Activated T-helper 1 cell treated with anti-CD3 and anti-CD28 coated beads, Interleukin-12 subunit alpha, Interleukin-12 subunit beta, Interleukin-2, Interleukin-4 antibody, amounts not matched to agents 30 ng/mL and 10 ng/mL and 1 ng/mL, durations not matched to agents 14 hours and 24 hours and 36 hours (primary cell): ENCODE measurements at regions of chr3 and their contacts with region 1.

Region 1: DNA sequence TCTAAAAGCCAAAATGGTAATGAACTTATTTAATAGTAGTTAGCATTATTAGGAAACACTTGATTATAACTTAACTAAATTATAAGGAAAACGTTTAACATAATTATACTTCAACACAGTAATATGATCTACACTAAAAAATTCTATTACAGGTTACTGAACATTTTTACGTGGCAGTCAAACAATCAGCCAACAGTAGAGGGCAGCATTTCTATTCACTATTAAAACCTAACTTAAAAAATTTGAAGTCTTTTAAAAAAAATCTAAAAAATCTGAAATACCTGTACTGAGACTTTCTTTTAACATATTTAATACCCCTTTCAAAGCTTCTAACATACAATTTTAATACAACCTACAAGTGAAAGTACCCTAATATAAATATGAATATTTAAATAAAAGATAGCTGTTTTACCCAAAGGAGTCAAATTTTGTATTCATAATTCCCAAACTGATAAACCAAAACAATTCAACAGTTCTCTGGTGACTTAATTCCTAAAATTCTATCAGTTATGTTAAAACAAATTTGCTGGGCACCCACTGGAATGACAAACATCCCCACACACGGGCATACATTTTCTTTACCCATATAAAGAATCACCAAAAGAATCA is 41.5 kb downstream of the DLG1 start:
- DNase-seq: peak; percentile 2
- H3K4me3 Mint-ChIP-seq: no peak overlapping the region
- H3K27ac Mint-ChIP-seq: no peak overlapping the region
- H3K4me1 Mint-ChIP-seq: peaks cover 41% of the 10 kb centered on the region
- H3K27me3 Mint-ChIP-seq: no peaks in the 10 kb centered on the region

Region 2: GRCh38 chr3:197224034-197224444 is 32.9 kb before region 1 on chr3:
- intact Hi-C with region 1: loop called (anchors 2 kb)
- DNase-seq: no peak
- H3K4me3 Mint-ChIP-seq: no peak overlapping the region
- H3K27ac Mint-ChIP-seq: no peak overlapping the region
- H3K4me1 Mint-ChIP-seq: peaks cover 28% of the 10 kb centered on the region
- H3K27me3 Mint-ChIP-seq: no peaks in the 10 kb centered on the region

Region 3: DNA sequence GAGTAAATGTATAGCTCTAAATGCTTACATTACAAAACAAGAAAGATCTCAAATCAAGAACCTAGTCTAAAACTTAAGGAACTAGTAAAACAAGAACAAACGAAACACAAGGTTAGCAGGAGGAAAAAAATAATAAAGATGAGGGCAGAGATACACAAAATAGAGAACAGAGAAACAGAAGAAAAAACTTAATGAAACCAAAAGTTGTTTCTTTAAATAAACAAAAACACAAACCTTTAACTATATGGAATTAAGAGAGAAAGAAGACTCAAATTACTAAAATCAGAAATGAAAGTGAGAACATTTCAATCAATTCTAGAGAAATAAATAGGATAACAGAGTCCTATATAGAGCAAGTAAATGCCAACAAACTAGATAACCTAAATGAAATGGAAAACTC is 18.1 kb before region 1 on chr3:
- intact Hi-C with region 1: loop called (anchors 2 kb)
- DNase-seq: no peak
- H3K4me3 Mint-ChIP-seq: peak overlapping the region; percentile 21
- H3K27ac Mint-ChIP-seq: peak overlapping the region; percentile 65
- H3K4me1 Mint-ChIP-seq: peaks cover 49% of the 10 kb centered on the region
- H3K27me3 Mint-ChIP-seq: no peaks in the 10 kb centered on the region

Region 4: DNA sequence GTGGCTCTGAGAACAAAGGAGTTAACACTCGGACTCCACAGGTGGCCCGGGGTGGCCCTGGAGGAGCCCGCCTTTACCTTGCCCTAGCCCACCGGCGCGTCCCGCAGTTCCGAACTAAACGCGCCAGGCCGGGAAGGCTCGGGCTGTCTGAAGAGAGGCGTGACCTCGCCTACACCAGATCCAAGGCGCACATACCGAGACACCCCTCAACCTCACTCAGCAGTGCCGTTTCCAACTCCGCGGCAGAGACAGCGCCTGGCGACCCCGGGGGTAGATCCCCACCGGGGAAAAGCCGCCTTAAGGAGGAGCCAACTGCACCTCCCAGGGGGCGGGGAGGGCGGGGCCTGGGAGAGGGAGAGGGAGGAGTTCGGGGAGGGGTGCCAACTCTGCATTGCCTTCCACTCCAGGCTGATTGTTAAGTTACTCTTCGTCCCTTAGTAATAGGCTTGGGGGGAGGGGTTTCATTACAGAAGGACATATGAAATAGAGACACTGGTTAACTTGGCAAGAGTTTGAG is 41.5 kb after region 1 on chr3 and contains the start of gene DLG1:
- intact Hi-C with region 1: loop called (anchors 2 kb)
- DNase-seq: peak; percentile 64
- H3K4me3 Mint-ChIP-seq: peak within 1 kb of the TSS; percentile 95
- H3K27ac Mint-ChIP-seq: peak within 1 kb of the TSS; percentile 96
- H3K4me1 Mint-ChIP-seq: peaks cover 39% of the 10 kb centered on the region
- H3K27me3 Mint-ChIP-seq: peaks cover 28% of the 10 kb centered on the region
- total RNA-seq, gene DLG1: 85.0 and 87.1 TPM in 2 replicates

Region 5: DNA sequence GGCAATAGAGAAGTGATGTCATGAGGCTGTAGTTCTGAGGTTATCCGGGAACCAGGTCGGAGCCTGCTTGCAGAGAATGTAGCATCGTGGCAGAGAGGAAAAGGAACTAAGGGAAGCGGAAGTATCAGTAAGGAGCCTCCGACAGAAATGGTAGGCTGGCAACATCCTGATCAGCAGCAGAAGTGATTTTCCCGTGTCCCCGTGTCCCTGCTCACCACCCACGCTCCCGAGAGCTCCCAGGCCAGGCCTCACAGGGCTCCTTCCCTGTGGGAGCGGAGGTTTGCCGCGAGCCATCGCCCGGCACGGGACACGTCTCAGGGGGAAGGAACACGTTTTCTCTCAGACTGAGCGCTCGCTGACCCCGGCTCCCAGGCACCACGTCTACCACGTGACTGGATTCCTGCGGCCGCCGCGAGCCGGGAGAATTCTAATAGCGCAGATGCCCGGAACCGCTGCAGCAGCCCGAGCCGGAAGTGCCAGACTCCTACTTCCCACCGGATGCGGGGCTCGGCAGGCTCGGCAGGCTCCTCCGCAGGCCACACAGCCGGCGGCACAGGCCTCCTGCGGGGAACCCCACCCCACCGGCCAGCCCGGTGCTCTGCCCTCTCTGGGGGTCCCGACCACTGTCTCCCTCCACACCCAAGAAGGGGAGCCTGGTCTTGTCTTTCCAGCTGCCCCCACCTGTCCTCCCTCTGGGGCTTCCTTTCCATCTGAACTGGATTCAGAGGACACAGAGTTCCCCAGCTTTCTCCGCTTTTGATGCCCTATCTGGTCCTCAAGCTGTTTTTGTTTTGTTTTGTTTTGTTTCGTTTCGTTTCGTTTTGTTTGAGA is 199.5 kb after region 1 on chr3:
- intact Hi-C with region 1: loop called (anchors 2 kb)
- DNase-seq: peak; percentile 36
- H3K4me3 Mint-ChIP-seq: peak overlapping the region; percentile 87
- H3K27ac Mint-ChIP-seq: peak overlapping the region; percentile 88
- H3K4me1 Mint-ChIP-seq: peaks cover 22% of the 10 kb centered on the region
- H3K27me3 Mint-ChIP-seq: peaks cover 22% of the 10 kb centered on the region

Region 6: DNA sequence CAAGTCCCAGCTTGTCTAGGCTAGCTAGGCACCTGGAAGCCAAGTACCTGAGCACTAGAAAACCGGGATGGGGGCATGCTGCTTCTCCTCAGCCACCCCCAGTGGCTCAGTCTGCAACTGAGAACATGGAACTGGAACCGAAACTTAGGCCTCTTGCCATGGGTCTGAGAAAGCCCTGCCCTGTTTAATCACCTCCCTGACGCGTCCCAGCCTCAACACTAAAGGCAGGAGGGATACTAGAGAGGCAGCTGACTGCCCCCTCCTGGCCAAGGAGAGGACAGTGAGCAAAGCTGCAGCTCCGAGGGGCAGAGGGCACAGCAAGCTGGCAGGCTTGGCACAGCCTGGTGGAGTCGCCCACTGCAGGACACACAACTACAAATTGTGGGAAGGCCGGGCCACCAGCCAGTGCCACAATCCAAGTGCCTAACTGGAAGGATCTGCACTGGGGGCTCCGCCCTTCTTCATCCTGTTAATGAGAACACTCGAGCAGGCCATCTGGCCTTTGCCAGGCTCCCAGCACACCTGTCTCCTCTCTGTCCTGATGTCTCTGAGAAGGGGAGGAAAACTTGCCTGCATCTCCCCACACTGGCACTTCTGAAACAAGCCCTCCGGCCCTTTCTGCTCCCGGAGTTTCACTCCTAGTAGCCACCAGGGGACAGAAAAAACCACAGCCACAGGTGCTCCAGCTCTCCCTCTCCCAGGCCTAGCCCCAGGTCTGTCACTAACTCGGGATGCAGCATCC is 245.1 kb after region 1 on chr3:
- intact Hi-C with region 1: loop called (anchors 1 kb)
- DNase-seq: peak; percentile 20
- H3K4me3 Mint-ChIP-seq: no peak overlapping the region
- H3K27ac Mint-ChIP-seq: no peak overlapping the region
- H3K4me1 Mint-ChIP-seq: no peaks in the 10 kb centered on the region
- H3K27me3 Mint-ChIP-seq: no peaks in the 10 kb centered on the region

Region 7: DNA sequence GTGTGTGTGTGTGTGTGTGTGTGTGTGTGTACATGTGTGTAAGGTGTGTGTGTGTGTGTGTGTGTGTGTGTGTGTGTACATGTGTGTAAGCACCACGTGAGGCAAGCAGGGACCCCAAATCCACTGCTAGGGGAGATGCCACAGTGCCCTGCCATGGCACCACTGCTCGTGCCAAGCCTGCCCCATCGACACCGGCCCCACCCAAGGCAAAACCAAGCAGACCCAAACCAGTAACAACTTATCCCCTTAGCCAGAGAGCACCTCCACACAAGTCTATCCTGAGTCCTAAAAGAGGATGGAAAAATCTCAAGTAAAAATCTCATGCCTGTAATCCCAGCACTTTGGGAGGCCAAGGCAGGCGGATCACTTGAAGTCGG is 253.7 kb after region 1 on chr3:
- intact Hi-C with region 1: loop called (anchors 1 kb)
- DNase-seq: no peak
- H3K4me3 Mint-ChIP-seq: no peak overlapping the region
- H3K27ac Mint-ChIP-seq: no peak overlapping the region
- H3K4me1 Mint-ChIP-seq: peaks cover 5% of the 10 kb centered on the region
- H3K27me3 Mint-ChIP-seq: no peaks in the 10 kb centered on the region